ENCODE measurements at regions of chr1 and their contacts with region 1.

Region 1: DNA sequence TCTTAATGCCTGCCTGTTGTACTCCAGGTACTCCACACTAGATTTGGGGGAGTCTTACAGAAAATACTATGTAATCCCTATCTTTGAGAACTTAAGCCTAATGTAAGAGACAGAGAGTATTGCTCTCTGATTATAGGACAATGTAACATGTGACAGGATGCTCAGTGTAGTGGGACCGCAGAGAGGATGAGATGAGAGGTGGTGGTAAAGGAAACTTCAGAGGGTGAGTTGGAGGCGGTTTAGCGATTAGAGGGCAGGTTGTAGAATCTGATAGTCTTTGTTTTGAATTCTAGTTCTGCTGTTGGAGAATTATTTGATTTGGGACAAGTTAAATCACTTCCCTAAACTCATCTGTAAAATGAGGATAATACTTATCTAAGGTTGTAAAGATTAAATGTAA is 5.4 kb downstream of the SOAT1 start:
- DNase-seq: no peak
- H3K4me3 Mint-ChIP-seq: peak overlapping the region; percentile 4
- H3K27ac Mint-ChIP-seq: peak overlapping the region; percentile 13
- H3K4me1 Mint-ChIP-seq: peaks cover 54% of the 10 kb centered on the region
- H3K27me3 Mint-ChIP-seq: no peaks in the 10 kb centered on the region
- CTCF ChIP-seq: no peak

Region 2: DNA sequence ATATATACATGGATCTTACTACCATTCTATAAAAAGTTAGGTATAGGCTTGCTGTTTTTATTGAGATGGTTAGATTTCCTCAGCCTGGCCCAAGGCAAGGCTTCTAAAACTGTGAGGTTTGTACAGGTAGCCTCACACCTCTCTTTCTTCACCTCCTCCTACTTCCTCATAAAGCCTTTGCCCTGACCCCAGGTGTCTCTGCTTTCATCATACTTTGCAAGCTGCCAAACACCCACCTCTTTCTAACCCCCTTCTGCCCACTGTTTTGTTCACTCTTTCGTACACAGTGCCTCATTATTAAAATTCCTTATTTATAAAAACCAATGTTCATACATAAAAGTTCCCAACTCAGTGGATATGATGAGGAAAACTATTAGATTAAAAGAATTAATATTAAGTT is 36.8 kb before region 1 on chr1:
- CTCF ChIA-PET with region 1: no interaction called
- intact Hi-C with region 1: no loop called
- DNase-seq: no peak
- H3K4me3 Mint-ChIP-seq: no peak overlapping the region
- H3K27ac Mint-ChIP-seq: no peak overlapping the region
- H3K4me1 Mint-ChIP-seq: no peaks in the 10 kb centered on the region
- H3K27me3 Mint-ChIP-seq: no peaks in the 10 kb centered on the region
- CTCF ChIP-seq: no peak

Region 3: DNA sequence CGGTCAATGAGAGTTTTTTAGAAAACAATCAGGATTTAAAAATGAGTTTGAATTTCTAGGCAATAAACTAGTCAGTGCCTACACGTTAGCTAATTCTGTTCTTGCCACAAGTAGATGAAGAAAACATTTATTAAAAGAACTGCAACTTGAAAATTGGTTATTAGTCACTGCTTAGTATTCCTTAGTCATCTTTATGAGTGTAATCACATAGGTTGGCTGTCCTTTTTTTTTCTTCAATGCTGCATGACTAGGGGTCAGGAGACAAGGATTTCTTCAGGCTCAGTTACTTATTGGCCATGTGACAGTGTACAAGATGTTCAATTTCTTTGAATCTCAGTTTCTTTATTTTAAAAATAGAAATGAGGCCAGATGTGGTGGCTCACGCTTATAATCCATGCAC is 11.8 kb after region 1 on chr1:
- CTCF ChIA-PET with region 1: no interaction called
- intact Hi-C with region 1: loop called (anchors 2 kb)
- DNase-seq: no peak
- H3K4me3 Mint-ChIP-seq: no peak overlapping the region
- H3K27ac Mint-ChIP-seq: no peak overlapping the region
- H3K4me1 Mint-ChIP-seq: peaks cover 23% of the 10 kb centered on the region
- H3K27me3 Mint-ChIP-seq: no peaks in the 10 kb centered on the region
- CTCF ChIP-seq: no peak

Region 4: DNA sequence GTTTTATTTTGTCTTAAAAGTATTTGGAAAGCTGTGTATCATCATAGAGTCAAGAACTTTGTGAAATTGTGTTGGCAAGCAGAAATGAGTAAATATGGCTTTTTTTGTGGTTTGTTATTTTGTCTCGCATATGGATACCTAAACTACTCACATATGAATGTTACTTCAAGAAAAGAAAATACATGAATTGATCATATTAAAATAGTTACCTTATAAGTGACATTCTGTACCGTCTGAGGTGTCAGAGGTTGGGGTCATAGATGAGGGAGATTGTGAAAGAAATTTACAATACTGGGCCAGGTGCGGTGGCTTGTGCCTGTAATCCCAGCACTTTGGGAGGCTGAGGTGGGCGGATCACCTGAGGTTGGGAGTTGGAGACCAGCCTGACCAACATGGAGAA is 35.5 kb after region 1 on chr1:
- CTCF ChIA-PET with region 1: no interaction called
- intact Hi-C with region 1: loop called (anchors 5 kb)
- DNase-seq: no peak
- H3K4me3 Mint-ChIP-seq: no peak overlapping the region
- H3K27ac Mint-ChIP-seq: no peak overlapping the region
- H3K4me1 Mint-ChIP-seq: peaks cover 22% of the 10 kb centered on the region
- H3K27me3 Mint-ChIP-seq: no peaks in the 10 kb centered on the region
- CTCF ChIP-seq: no peak